CD4-positive, alpha-beta memory T cell (primary cell): ENCODE measurements at regions of chr1 and their contacts with region 1.

Region 1: DNA sequence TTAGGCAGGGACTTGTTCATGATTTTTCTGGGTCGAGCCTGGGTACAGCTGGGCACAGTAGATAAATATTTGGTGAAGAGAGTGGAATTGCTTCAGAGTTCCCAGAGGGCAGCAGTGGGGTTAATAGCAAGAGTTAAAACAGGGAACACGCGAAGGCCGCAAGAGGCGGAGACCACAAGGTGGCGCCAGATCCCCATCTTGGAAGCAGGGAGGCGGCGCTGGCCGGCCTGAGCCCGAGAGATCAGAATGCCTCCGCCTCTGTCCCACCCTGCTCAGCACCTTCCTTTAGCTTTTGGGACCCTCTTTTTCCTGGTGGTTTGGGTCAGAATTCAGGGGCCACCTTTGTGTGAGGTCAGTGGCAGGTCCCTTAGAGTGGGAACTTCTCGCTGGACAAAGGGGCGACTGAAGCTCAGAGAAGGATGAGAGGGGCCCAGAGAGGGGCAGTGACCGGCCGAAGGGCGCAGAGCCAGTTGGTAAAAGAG is 6.5 kb upstream of the PADI2 start:
- DNase-seq: peak; percentile 65 to 74 (median 69)
- H3K4me3 ChIP-seq: no peak overlapping the region
- H3K4me3 Mint-ChIP-seq: no peak overlapping the region
- H3K27ac ChIP-seq: no peak overlapping the region
- H3K27ac Mint-ChIP-seq: peak overlapping the region in 1 of 7 donors; percentile 30
- H3K4me1 ChIP-seq: no peaks in the 10 kb centered on the region
- H3K4me1 Mint-ChIP-seq: peaks cover 0 to 2% (median 0%) of the 10 kb centered on the region in 4 donors
- H3K27me3 ChIP-seq: no peaks in the 10 kb centered on the region
- H3K27me3 Mint-ChIP-seq: peaks cover 5 to 18% of the 10 kb centered on the region in 2 donors

Region 2: GRCh38 chr1:17148950-17149608 is 23.3 kb after region 1 on chr1:
- CTCF ChIA-PET with region 1: no interaction called
- POLR2A ChIA-PET with region 1: no interaction called
- intact Hi-C with region 1: no loop called
- DNase-seq: no peak
- H3K4me3 ChIP-seq: no peak overlapping the region
- H3K4me3 Mint-ChIP-seq: no peak overlapping the region
- H3K27ac ChIP-seq: no peak overlapping the region
- H3K27ac Mint-ChIP-seq: no peak overlapping the region
- H3K4me1 ChIP-seq: no peaks in the 10 kb centered on the region
- H3K4me1 Mint-ChIP-seq: no peaks in the 10 kb centered on the region
- H3K27me3 ChIP-seq: no peaks in the 10 kb centered on the region
- H3K27me3 Mint-ChIP-seq: peaks cover 13 to 24% of the 10 kb centered on the region in 2 donors

Region 3: DNA sequence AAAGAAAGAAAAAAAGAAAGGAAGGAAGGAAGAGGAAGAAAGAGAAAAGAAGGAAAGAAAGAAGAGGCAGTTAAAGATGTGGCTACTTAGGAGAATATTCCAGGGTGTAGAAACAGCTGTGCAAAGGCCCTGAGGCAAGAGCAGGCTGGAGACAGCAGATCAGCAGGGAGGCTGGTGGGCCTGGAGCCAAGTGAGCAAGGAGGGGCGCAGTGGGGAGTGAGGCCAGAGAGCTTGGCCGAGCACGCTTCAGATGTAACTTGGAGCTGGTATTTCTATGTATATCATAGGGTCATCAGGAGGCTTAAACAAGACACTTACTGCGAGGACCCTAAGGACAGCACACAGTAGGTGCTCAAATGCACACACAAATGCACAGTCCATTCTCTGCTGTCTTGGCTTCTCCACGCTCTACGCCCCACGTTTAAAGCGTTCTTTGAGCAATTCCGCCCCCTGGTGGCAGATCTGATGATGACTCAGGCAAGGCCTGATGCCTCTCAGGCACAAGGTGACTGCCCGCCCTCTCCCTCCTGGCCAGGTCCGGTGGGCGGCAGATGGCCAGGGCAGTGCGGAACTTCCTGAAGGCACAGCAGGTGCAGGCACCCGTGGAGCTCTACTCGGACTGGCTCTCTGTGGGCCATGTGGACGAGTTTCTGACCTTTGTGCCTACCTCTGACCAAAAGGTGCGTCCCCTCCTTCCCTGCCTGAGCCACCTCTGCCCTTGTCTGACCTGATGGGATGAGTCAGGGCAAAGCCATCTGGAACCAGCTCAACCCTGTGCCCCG is 111.2 kb after region 1 on chr1:
- CTCF ChIA-PET with region 1: interaction called, 144 read pairs
- POLR2A ChIA-PET with region 1: interaction called, 6 read pairs
- intact Hi-C with region 1: loop called (anchors 1 kb)
- DNase-seq: peak; percentile 69 to 79 (median 74)
- H3K4me3 ChIP-seq: no peak overlapping the region
- H3K4me3 Mint-ChIP-seq: no peak overlapping the region
- H3K27ac ChIP-seq: no peak overlapping the region
- H3K27ac Mint-ChIP-seq: peak overlapping the region in 1 of 7 donors; percentile 73
- H3K4me1 ChIP-seq: no peaks in the 10 kb centered on the region
- H3K4me1 Mint-ChIP-seq: peaks cover 0 to 9% (median 0%) of the 10 kb centered on the region in 4 donors
- H3K27me3 ChIP-seq: no peaks in the 10 kb centered on the region
- H3K27me3 Mint-ChIP-seq: peaks cover 2 to 3% of the 10 kb centered on the region in 2 donors

Region 4: GRCh38 chr1:17335821-17336710 is 210.3 kb after region 1 on chr1:
- CTCF ChIA-PET with region 1: interaction called, 3 read pairs
- POLR2A ChIA-PET with region 1: no interaction called
- intact Hi-C with region 1: loop called (anchors 10 kb)
- DNase-seq: peak in 4 of 5 donors; percentile 25 to 36 (median 33)
- H3K4me3 ChIP-seq: no peak overlapping the region
- H3K4me3 Mint-ChIP-seq: no peak overlapping the region
- H3K27ac ChIP-seq: no peak overlapping the region
- H3K27ac Mint-ChIP-seq: no peak overlapping the region
- H3K4me1 ChIP-seq: no peaks in the 10 kb centered on the region
- H3K4me1 Mint-ChIP-seq: peaks cover 0 to 3% (median 0%) of the 10 kb centered on the region in 4 donors
- H3K27me3 ChIP-seq: no peaks in the 10 kb centered on the region
- H3K27me3 Mint-ChIP-seq: peaks cover 16 to 18% of the 10 kb centered on the region in 2 donors

Region 5: DNA sequence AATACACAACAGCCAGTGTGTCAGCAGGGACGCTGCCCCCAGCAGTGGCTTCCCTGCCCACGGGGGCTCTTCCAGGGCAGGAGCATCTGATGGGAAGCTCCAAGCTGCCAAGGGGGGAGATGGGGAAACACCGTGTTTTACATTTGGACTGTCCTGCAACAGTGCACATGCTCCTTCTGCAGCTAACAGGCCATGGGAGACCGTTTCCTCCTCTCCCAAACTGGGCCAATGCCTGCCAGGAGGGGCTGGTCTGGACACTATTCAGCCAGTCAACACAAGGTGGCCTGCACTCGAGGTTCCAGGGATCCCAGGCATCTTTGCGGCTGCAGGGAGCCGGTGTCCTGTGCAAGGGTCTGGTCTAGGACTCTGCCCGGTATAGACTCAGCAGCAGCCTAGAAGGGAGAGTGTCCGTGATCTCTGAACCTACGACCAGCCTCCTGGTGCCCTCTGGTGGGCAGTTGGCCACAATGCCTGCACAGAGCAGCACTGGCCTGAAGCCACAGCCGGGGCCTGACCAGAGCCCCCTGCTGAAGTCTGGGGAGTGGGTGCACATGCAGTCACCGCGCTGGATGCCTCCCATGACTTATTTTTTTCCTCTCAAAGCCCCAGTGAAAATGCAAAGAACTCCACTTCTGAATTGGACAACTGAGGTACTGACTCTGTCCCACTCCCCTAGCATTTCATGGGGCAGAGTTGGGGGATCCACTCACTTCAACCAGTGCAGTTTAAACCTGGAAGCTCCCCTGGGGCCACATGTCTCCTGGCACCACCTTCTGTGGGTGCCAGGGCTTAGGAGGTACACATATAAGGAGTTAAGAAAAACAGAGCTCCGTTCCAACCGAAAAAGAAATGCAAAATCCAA is 280.3 kb after region 1 on chr1:
- CTCF ChIA-PET with region 1: no interaction called
- POLR2A ChIA-PET with region 1: no interaction called
- intact Hi-C with region 1: loop called (anchors 2 kb)
- DNase-seq: peak in 2 of 5 donors; percentile 10 to 18
- H3K4me3 ChIP-seq: no peak overlapping the region
- H3K4me3 Mint-ChIP-seq: no peak overlapping the region
- H3K27ac ChIP-seq: no peak overlapping the region
- H3K27ac Mint-ChIP-seq: peak overlapping the region in 1 of 7 donors; percentile 25
- H3K4me1 ChIP-seq: no peaks in the 10 kb centered on the region
- H3K4me1 Mint-ChIP-seq: peaks cover 0 to 2% (median 0%) of the 10 kb centered on the region in 4 donors
- H3K27me3 ChIP-seq: no peaks in the 10 kb centered on the region
- H3K27me3 Mint-ChIP-seq: no peaks in the 10 kb centered on the region